ENCODE measurements at regions of chr9 and their contacts with region 1.

Region 1: DNA sequence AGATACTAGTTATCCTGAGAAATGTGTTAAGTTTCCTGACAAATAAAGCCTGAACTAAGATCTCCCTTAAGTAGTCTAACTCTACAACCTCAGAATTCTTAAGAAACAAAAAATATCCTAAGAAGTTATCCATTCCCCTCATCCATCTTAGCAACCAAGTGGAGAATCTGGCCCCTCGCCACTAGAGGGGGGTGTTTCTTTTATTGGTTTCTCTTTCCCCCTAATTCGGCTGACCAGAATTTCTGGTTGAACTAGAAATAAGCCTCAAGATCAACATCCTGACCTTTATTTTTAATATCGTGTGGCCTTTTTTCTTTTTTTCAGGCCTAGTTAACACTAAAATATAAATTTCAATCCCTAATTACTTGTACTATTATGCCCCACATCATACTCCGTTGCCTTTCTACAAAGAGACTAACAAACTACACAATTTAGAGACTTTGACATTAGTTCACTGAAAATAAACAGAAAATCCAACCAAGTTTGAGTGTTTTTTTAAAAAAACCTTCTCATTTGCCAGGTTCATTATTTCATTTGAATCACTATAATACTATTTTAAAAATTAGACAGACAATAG is 14.3 kb upstream of the NR4A3 start:
- DNase-seq: peak; percentile 83
- H3K4me3 Mint-ChIP-seq: no peak overlapping the region
- H3K27ac Mint-ChIP-seq: no peak overlapping the region
- H3K4me1 Mint-ChIP-seq: no peaks in the 10 kb centered on the region
- H3K27me3 Mint-ChIP-seq: no peaks in the 10 kb centered on the region
- CTCF ChIP-seq: peak; percentile 80

Region 2: DNA sequence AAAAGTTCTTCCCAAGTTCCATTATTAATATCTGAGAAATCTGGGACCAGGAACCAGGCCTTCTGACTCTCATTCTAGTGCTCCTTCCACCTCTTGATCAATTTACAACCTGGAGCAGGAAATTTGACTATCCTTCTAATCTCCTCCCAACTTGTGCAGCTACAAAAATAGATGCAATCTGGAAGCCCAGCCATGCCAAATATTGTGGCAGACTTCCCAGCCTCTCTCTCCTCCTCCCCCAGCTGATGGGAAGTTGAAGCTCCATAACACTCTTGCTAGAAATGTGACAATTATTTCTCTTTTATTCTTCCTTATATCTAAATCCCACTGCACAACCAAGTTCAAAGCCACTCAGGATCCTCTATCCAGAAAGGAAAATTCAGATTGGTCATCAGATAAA is 333.2 kb before region 1 on chr9:
- CTCF ChIA-PET with region 1: no interaction called
- POLR2A ChIA-PET with region 1: no interaction called
- intact Hi-C with region 1: no loop called
- DNase-seq: no peak
- H3K4me3 Mint-ChIP-seq: no peak overlapping the region
- H3K27ac Mint-ChIP-seq: no peak overlapping the region
- H3K4me1 Mint-ChIP-seq: no peaks in the 10 kb centered on the region
- H3K27me3 Mint-ChIP-seq: peaks cover 13% of the 10 kb centered on the region
- CTCF ChIP-seq: no peak

Region 3: DNA sequence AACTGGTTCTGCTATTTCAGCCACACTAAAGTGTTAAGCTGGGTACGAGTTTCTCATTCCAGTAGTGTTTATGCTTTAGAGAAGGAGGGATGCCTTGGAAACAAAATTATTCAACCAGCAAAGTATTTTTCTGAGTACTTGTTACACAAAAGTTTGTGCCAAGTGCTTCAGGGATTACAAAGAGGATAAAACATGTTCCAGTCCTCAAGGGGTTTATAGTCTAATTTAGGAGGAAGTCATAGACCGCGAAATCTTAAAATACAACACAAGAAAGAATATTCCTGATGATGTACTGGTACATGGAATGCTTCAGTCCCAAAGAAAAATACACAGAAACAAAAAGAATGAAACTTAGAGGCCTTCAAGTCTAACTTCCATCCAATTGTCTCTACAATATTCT is 71.1 kb before region 1 on chr9:
- CTCF ChIA-PET with region 1: no interaction called
- POLR2A ChIA-PET with region 1: no interaction called
- intact Hi-C with region 1: no loop called
- DNase-seq: no peak
- H3K4me3 Mint-ChIP-seq: no peak overlapping the region
- H3K27ac Mint-ChIP-seq: no peak overlapping the region
- H3K4me1 Mint-ChIP-seq: no peaks in the 10 kb centered on the region
- H3K27me3 Mint-ChIP-seq: peaks cover 23% of the 10 kb centered on the region
- CTCF ChIP-seq: no peak

Region 4: DNA sequence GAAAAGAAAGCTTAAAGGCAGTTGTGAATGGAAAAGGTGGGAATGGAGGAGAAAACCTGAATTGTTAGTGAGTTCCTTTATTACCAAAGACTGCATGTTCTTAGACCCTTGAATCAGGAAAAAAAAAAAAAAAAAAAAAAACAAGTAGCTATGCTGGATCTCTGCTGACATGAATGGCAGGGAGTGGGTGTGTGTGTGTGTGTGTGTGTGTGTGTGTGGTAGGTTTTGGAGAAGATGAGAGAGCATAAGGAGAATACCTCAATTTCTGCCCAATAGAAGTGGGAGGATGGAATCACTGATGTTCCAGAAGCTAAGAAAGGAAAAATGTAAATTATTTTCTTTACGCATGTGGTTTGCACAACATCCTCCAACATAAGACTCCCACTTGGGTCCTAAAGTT is 11.1 kb before region 1 on chr9:
- CTCF ChIA-PET with region 1: no interaction called
- POLR2A ChIA-PET with region 1: no interaction called
- intact Hi-C with region 1: no loop called
- DNase-seq: no peak
- H3K4me3 Mint-ChIP-seq: no peak overlapping the region
- H3K27ac Mint-ChIP-seq: no peak overlapping the region
- H3K4me1 Mint-ChIP-seq: no peaks in the 10 kb centered on the region
- H3K27me3 Mint-ChIP-seq: no peaks in the 10 kb centered on the region
- CTCF ChIP-seq: no peak

Region 5: GRCh38 chr9:100222674-100223073 is 415.3 kb after region 1 on chr9:
- CTCF ChIA-PET with region 1: no interaction called
- POLR2A ChIA-PET with region 1: no interaction called
- intact Hi-C with region 1: loop called (anchors 5 kb)
- DNase-seq: peak; percentile 33
- H3K4me3 Mint-ChIP-seq: no peak overlapping the region
- H3K27ac Mint-ChIP-seq: no peak overlapping the region
- H3K4me1 Mint-ChIP-seq: no peaks in the 10 kb centered on the region
- H3K27me3 Mint-ChIP-seq: no peaks in the 10 kb centered on the region
- CTCF ChIP-seq: peak; percentile 48